ENCODE measurements at regions of chr16 and their contacts with region 1.

Region 1: GRCh38 chr16:62760398-62760797 is 724.2 kb upstream of the CDH8 start:
- DNase-seq: no peak
- H3K4me3 ChIP-seq: no peak overlapping the region
- H3K27ac ChIP-seq: no peak overlapping the region
- H3K4me1 ChIP-seq: no peaks in the 10 kb centered on the region
- H3K27me3 ChIP-seq: no peaks in the 10 kb centered on the region
- CTCF ChIP-seq: no peak

Region 2: DNA sequence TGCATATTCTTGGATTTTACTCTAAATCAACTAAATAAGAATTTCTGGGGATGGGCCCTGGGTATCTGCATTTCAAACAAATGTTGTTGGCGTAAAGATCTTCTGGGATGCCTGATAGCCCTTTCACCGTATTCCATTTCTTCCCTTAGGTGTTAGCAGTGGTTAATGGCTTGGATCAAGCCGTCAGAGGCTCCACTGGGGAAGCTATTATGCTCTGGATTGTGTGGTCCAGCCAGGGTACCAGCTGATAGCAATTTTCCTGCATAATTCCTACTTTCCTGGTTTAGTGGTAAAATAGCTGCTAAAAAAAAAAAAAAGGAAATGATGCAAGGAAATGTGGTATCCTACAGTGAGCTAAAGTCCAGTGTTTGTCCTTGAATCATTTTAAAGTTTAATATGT is 1089.2 kb before region 1 on chr16:
- intact Hi-C with region 1: no loop called
- DNase-seq: no peak
- H3K4me3 ChIP-seq: no peak overlapping the region
- H3K27ac ChIP-seq: no peak overlapping the region
- H3K4me1 ChIP-seq: no peaks in the 10 kb centered on the region
- H3K27me3 ChIP-seq: no peaks in the 10 kb centered on the region
- CTCF ChIP-seq: no peak

Region 3: GRCh38 chr16:62014319-62014933 is 746.0 kb before region 1 on chr16:
- intact Hi-C with region 1: loop called (anchors 10 kb)
- DNase-seq: no peak
- H3K4me3 ChIP-seq: no peak overlapping the region
- H3K27ac ChIP-seq: no peak overlapping the region
- H3K4me1 ChIP-seq: no peaks in the 10 kb centered on the region
- H3K27me3 ChIP-seq: no peaks in the 10 kb centered on the region
- CTCF ChIP-seq: no peak